ENCODE measurements at regions of chr15 and their contacts with region 1.

Region 1: GRCh38 chr15:69841113-69841828 is 256.4 kb downstream of the TLE3 start:
- DNase-seq: no peak
- H3K4me3 ChIP-seq: no peak overlapping the region
- H3K27ac ChIP-seq: no peak overlapping the region
- H3K4me1 ChIP-seq: no peaks in the 10 kb centered on the region
- H3K27me3 ChIP-seq: peaks cover 4% of the 10 kb centered on the region
- CTCF ChIP-seq: no peak

Region 2: DNA sequence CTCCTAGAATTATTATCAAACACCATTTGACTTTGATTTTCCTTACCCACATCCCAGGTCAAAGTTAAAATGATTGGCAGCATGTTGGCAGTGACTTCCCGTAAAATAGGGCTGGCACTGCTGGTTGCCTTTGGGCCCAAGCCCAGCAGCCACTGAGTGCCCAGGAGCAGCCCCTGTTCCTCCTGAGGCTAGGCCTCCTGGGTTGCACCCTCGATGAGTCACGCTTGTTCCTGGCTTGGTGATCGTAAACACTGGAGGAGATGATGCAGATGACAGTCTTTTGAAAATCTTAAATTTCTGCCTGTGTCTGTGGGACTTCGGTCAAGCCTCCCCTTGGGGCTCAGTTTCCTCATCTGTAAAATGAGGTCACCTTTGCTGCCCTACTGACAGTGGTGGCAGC is 33.5 kb before region 1 on chr15:
- CTCF ChIA-PET with region 1: no interaction called
- dilution Hi-C with region 1: loop called (anchors 5 kb)
- in situ Hi-C with region 1: no loop called
- intact Hi-C with region 1: no loop called
- DNase-seq: peak; percentile 17
- H3K4me3 ChIP-seq: no peak overlapping the region
- H3K27ac ChIP-seq: no peak overlapping the region
- H3K4me1 ChIP-seq: no peaks in the 10 kb centered on the region
- H3K27me3 ChIP-seq: peaks cover 1% of the 10 kb centered on the region
- CTCF ChIP-seq: no peak

Region 3: GRCh38 chr15:69823218-69823907 is 17.9 kb before region 1 on chr15:
- CTCF ChIA-PET with region 1: no interaction called
- dilution Hi-C with region 1: no loop called
- in situ Hi-C with region 1: no loop called
- intact Hi-C with region 1: no loop called
- DNase-seq: peak; percentile 10
- H3K4me3 ChIP-seq: no peak overlapping the region
- H3K27ac ChIP-seq: no peak overlapping the region
- H3K4me1 ChIP-seq: no peaks in the 10 kb centered on the region
- H3K27me3 ChIP-seq: peaks cover 3% of the 10 kb centered on the region
- CTCF ChIP-seq: no peak

Region 4: DNA sequence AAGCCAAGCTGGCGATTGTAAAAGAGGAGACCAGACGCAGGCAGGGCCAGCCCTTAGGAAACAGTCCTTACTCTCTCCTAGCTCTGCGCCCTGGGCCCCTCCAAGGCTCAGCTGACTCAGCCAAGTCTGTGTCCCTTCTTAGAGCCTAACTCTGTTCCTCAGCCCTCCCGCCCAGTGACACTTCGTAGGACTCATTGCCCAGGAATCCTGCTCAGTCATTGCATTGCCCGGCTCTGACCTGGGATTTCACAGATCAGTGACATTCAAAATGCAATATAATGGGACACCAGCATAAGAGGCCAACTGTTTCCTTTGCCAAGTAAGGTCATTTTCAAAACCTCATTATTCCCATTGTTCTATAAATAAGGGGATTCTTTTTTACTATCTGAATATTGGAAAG is 12.3 kb after region 1 on chr15:
- CTCF ChIA-PET with region 1: no interaction called
- dilution Hi-C with region 1: no loop called
- in situ Hi-C with region 1: no loop called
- intact Hi-C with region 1: no loop called
- DNase-seq: peak; percentile 36
- H3K4me3 ChIP-seq: no peak overlapping the region
- H3K27ac ChIP-seq: no peak overlapping the region
- H3K4me1 ChIP-seq: no peaks in the 10 kb centered on the region
- H3K27me3 ChIP-seq: peaks cover 2% of the 10 kb centered on the region
- CTCF ChIP-seq: no peak

Measured in mammary epithelial cell (primary cell).